ENCODE measurements at regions of chr11 and their contacts with region 1.

Region 1: DNA sequence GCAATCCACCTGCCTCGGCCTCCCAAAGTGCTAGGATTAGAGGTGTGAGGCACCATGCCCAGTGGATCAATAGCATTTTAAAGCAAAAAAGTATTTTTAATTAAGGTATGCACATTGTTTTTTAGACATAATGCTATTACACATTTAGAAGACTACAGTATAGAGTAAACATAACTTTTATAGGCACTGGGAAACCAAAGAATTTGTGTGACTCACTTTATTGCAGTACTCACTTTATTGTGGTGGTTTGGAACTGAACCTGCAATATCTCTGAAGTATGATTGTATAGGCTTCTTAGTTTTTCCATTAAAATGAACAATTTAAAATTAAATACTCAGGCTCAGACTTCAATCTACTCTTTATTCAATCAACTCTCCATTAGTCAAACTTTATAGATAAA is 17.5 kb upstream of the CD3E start:
- DNase-seq: no peak
- ATAC-seq: no peak

Region 2: GRCh38 chr11:118202599-118203422 is 84.2 kb before region 1 on chr11:
- intact Hi-C with region 1: loop called (anchors 10 kb)
- DNase-seq: no peak
- ATAC-seq: no peak

Region 3: GRCh38 chr11:118342503-118343161 is 55.6 kb after region 1 on chr11 and contains the start of gene CD3D:
- intact Hi-C with region 1: loop called (anchors 10 kb)
- DNase-seq: no peak
- ATAC-seq: no peak
- total RNA-seq, gene CD3D: 3.8 TPM